K562 (cell line): ENCODE measurements at regions of chr4 and their contacts with region 1.

Region 1: GRCh38 chr4:86934771-86935565 is at the start of gene AFF1:
- DNase-seq: peak; percentile 96 to 97 (median 97)
- ATAC-seq: peak; percentile 86
- H3K4me3 ChIP-seq: peak within 1 kb of the TSS; percentile 76
- H3K27ac ChIP-seq: peak within 1 kb of the TSS; percentile 87
- H3K4me1 ChIP-seq: peaks cover 5 to 17% of the 10 kb centered on the region in 2 experiments
- H3K27me3 ChIP-seq: no peaks in the 10 kb centered on the region
- CTCF ChIP-seq: peak in 2 of 3 experiments; percentile 19 to 46; a peak in 4 of 6 replicates
- EP300 ChIP-seq: peak; percentile 24; the same call in 1 of the 2 replicates
- POLR2A ChIP-seq: peak; percentile 57; the same call in 1 of the 2 replicates
- RAD21 ChIP-seq: 0 out of 4 replicates have a peak, but pooled peaks of 1 of the 2 experiments have one; percentile 6
- polyA plus RNA-seq, gene AFF1: 4.1 to 9.9 TPM

Region 2: DNA sequence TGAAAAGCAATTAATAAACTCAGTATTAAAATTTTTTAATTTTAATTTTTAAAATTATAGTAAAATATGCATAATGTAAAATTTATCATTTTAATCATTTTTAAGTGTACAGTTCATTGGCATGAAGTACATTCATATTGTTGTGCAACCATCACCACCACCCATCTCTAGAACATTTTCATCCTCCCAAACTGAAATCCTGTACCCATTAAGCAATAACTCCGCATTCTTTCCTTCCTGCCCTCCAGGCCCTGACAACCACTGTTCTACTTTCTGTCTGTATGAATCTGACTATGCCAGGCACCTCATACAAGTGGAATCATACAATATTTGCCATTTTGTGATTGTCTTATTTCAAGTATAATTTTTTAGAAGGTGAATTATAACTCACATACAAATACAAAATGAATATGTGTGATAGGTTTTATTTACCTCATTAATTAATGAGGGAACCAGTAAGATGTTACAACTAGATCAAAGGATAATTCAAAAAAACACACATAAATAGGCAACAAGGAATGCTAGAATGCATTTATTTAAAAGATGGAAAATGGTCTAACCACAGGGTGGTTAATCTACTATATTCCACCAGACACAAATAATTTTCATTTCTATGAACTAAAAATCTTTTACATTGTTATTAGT is 13.2 kb before region 1 on chr4:
- CTCF ChIA-PET with region 1: no interaction called
- POLR2A ChIA-PET with region 1: interaction called, 4 read pairs
- in situ Hi-C with region 1: no loop called
- intact Hi-C with region 1: loop called (anchors 1 kb)
- DNase-seq: no peak
- ATAC-seq: no peak
- H3K4me3 ChIP-seq: no peak overlapping the region
- H3K27ac ChIP-seq: no peak overlapping the region
- H3K4me1 ChIP-seq: peaks cover 10 to 17% of the 10 kb centered on the region in 2 experiments; a peak in 4 of 5 replicates
- H3K27me3 ChIP-seq: no peaks in the 10 kb centered on the region
- CTCF ChIP-seq: no peak
- EP300 ChIP-seq: no peak
- POLR2A ChIP-seq: no peak
- RAD21 ChIP-seq: no peak

Region 3: DNA sequence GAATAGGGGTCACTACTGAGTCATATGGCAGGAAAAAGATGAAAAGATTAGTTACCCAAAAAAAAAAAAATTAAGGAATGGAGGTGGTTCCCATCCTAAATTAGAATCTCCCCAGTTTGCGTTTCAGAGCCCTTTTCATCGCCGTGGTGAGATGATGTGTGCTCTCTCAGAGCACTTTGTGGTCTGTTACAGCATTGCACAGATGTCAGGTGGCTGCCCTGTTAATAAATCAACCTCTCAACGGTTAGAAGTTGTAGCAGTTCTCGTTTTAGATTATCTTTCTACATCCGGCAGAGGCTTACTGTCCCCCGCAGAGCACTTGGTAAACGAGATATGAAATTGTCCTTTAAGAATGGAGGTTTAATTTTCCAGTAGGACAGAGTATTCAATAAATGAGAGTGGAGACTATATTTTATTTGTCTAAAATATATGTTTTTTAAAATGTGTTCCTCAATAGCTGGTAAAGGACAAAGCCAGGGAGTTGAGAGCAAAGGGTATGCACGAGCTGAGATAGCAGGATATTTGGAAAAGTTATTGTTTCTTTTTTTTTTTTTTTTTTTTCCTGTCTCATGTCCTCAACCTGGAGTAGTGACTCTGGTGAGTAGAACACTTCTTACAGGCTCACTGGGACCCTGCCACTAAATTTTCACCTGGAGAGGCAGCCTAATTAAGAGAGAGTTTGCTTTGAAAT is 26.8 kb after region 1 on chr4:
- CTCF ChIA-PET with region 1: interaction called, 4 read pairs
- POLR2A ChIA-PET with region 1: interaction called, 4 read pairs
- in situ Hi-C with region 1: no loop called
- intact Hi-C with region 1: loop called (anchors 1 kb)
- DNase-seq: peak; percentile 35 to 91 (median 64)
- ATAC-seq: peak; percentile 94
- H3K4me3 ChIP-seq: no peak overlapping the region; the same call in 1 of the 2 replicates
- H3K27ac ChIP-seq: peak overlapping the region; percentile 87
- H3K4me1 ChIP-seq: peaks cover 9 to 47% of the 10 kb centered on the region in 2 experiments; a peak in 4 of 5 replicates
- H3K27me3 ChIP-seq: no peaks in the 10 kb centered on the region
- CTCF ChIP-seq: peak in 1 of 3 experiments; percentile 15; a peak in 1 of 6 replicates
- EP300 ChIP-seq: peak; percentile 99
- POLR2A ChIP-seq: no peak
- RAD21 ChIP-seq: peak in 1 of 2 experiments; percentile 28; a peak in 1 of 4 replicates

Region 4: DNA sequence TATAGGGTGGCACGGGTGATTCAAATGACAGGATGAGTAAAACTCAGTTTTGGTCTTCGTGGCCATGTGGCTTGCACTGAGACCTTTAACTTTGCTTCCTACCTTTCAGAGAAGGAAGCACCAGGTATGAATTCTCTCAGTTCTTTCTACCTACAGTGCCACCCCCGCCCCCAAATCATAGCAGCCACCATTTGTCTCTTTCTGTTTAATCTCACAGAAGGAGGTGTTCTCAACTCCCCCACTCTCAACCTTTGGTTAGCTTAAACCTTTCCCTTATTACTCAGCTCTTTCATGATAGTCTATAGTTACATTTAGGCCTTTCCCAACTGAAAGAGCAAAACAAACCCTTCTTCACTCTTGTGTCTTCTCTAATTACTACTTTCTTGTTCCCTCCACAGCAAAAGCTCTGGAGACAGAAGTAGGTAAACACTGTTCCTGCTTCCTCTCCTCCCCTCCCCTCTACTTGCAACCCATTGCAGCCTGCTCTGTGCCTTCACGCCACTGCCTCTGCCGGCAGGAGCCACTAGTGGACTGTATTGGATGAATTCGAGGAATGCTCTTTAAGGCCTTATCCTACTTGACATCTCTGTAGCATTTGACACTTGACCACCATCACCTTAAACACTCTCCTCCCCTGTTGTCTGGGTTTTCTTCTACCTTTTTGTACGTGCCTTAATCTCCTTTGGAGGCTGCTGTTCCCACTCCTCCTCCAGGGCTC is 123.5 kb after region 1 on chr4:
- CTCF ChIA-PET with region 1: no interaction called
- POLR2A ChIA-PET with region 1: no interaction called
- in situ Hi-C with region 1: no loop called
- intact Hi-C with region 1: loop called (anchors 5 kb)
- DNase-seq: peak; percentile 39 to 77 (median 58)
- ATAC-seq: peak; percentile 92
- H3K4me3 ChIP-seq: no peak overlapping the region
- H3K27ac ChIP-seq: peak overlapping the region; percentile 41; the same call in 2 of the 3 replicates
- H3K4me1 ChIP-seq: peaks cover 11 to 46% of the 10 kb centered on the region in 2 experiments; a peak in 4 of 5 replicates
- H3K27me3 ChIP-seq: no peaks in the 10 kb centered on the region
- CTCF ChIP-seq: peak; percentile 64 to 73 (median 68)
- EP300 ChIP-seq: peak; percentile 22; the same call in 1 of the 2 replicates
- POLR2A ChIP-seq: no peak
- RAD21 ChIP-seq: peak; percentile 53 to 74

Region 5: DNA sequence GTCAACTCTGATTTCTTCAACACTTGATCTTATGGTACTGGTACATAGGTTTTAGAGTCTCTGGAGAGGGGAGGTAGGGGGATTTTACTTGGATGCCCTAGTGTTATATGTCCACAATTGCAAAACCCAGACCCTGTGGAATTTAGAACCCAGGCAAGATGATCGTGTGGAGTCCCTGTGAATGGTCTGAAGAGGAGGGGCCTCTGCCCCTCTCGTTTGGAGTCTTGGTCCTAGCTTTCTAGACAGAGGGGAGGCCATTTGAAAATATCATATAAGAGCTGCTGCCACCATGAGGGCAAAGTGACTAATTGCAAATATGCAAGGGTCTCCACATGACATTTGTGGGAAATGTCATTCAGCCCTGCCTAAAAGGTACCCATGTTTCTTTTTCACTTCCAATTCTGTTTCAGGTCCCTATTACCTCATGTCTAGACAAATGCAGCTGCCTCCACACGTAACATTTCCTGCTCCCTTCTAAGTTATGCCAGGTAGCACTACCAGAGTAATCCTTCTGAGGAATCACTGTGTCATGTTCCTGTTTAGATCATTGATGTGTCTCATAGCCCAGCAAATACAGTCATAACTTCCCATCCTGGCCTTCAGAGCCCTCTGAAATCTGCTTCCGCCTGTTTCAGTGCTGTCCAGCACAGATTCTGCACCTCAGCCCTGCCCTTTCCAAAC is 158.6 kb after region 1 on chr4:
- CTCF ChIA-PET with region 1: interaction called, 4 read pairs
- POLR2A ChIA-PET with region 1: no interaction called
- in situ Hi-C with region 1: no loop called
- intact Hi-C with region 1: loop called (anchors 1 kb)
- DNase-seq: peak; percentile 28 to 68 (median 54)
- ATAC-seq: peak; percentile 83
- H3K4me3 ChIP-seq: no peak overlapping the region
- H3K27ac ChIP-seq: no peak overlapping the region
- H3K4me1 ChIP-seq: peaks cover 5 to 23% of the 10 kb centered on the region in 2 experiments; a peak in 3 of 5 replicates
- H3K27me3 ChIP-seq: no peaks in the 10 kb centered on the region
- CTCF ChIP-seq: peak; percentile 55 to 79 (median 71)
- EP300 ChIP-seq: no peak
- POLR2A ChIP-seq: no peak
- RAD21 ChIP-seq: peak; percentile 56 to 75